CD4-positive, alpha-beta T cell (primary cell): ENCODE measurements at regions of chr13 and their contacts with region 1.

Region 1: DNA sequence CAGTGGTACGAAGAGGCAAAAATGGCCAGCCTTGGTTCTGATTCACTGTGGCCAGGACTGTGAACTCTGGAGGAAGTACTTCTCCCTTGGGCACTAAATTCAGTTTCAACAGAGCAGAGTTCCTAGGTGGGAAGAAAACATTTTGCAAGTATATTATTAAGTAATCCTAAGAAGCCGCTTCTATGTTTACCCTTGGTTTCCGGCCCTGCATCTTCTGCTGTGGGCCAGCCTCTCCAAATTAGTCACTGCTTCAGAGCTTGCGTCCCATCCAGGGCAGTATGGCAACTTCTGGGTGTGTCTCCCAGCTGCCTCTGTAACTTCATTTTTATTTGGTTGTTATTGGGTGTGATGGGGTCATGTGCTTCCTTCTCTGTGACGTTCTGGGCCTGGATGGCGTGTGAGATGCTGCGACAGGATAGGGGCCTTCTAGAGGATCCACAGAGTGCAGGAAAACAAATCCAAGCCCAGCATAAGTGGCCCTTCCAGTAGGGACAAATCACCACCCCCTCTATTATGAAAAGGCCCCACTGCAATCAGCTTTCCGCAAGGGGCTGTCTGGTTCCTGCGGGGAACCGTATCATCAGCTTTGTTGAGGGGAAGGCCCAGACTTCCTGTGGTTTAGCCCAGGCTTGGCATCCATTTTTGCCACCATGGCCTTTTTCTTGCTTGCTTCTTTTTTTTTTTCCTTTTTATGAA is 55.1 kb upstream of the C1QTNF9 start:
- DNase-seq: peak; percentile 46 to 92 (median 64)
- ATAC-seq: peak; percentile 66
- H3K4me3 ChIP-seq: peak overlapping the region; percentile 78
- H3K4me3 Mint-ChIP-seq: peak overlapping the region; percentile 94
- H3K27ac ChIP-seq: peak overlapping the region; percentile 89 to 92
- H3K27ac Mint-ChIP-seq: peak overlapping the region; percentile 92
- H3K4me1 ChIP-seq: peaks cover 76% of the 10 kb centered on the region
- H3K4me1 Mint-ChIP-seq: peaks cover 91% of the 10 kb centered on the region
- H3K27me3 ChIP-seq: no peaks in the 10 kb centered on the region
- H3K27me3 Mint-ChIP-seq: no peaks in the 10 kb centered on the region
- CTCF ChIP-seq: no peak

Region 2: GRCh38 chr13:24160454-24161009 is 93.8 kb before region 1 on chr13 and contains the start of gene SPATA13:
- CTCF ChIA-PET with region 1: no interaction called
- POLR2A ChIA-PET with region 1: interaction called, 7 read pairs
- intact Hi-C with region 1: loop called in 1 of 2 experiments (anchors 2 kb)
- DNase-seq: peak; percentile 89 to 99 (median 94)
- ATAC-seq: peak; percentile 92
- H3K4me3 ChIP-seq: peak within 1 kb of the TSS; percentile 81
- H3K4me3 Mint-ChIP-seq: peak within 1 kb of the TSS; percentile 90
- H3K27ac ChIP-seq: no peak within 1 kb of the TSS
- H3K27ac Mint-ChIP-seq: peak within 1 kb of the TSS; percentile 74
- H3K4me1 ChIP-seq: peaks cover 18% of the 10 kb centered on the region
- H3K4me1 Mint-ChIP-seq: peaks cover 14% of the 10 kb centered on the region
- H3K27me3 ChIP-seq: no peaks in the 10 kb centered on the region
- H3K27me3 Mint-ChIP-seq: no peaks in the 10 kb centered on the region
- CTCF ChIP-seq: no peak
- total RNA-seq, gene SPATA13: 87.7 to 94.6 TPM

Region 3: GRCh38 chr13:24264976-24265375 is 10.7 kb after region 1 on chr13:
- CTCF ChIA-PET with region 1: interaction called, 21 read pairs
- POLR2A ChIA-PET with region 1: interaction called, 596 read pairs
- intact Hi-C with region 1: loop called (anchors 1 kb)
- DNase-seq: peak; percentile 65 to 92 (median 82)
- ATAC-seq: peak; percentile 87
- H3K4me3 ChIP-seq: peak overlapping the region; percentile 26
- H3K4me3 Mint-ChIP-seq: peak overlapping the region; percentile 86
- H3K27ac ChIP-seq: peak overlapping the region; percentile 81 to 82
- H3K27ac Mint-ChIP-seq: peak overlapping the region; percentile 97
- H3K4me1 ChIP-seq: peaks cover 81% of the 10 kb centered on the region
- H3K4me1 Mint-ChIP-seq: peaks cover 95% of the 10 kb centered on the region
- H3K27me3 ChIP-seq: no peaks in the 10 kb centered on the region
- H3K27me3 Mint-ChIP-seq: no peaks in the 10 kb centered on the region
- CTCF ChIP-seq: no peak

Region 4: GRCh38 chr13:24307211-24308067 is 53.1 kb after region 1 on chr13:
- CTCF ChIA-PET with region 1: interaction called, 4 read pairs
- POLR2A ChIA-PET with region 1: interaction called, 3 read pairs
- intact Hi-C with region 1: loop called in 1 of 2 experiments (anchors 5 kb)
- DNase-seq: no peak
- ATAC-seq: peak; percentile 17
- H3K4me3 ChIP-seq: no peak overlapping the region
- H3K4me3 Mint-ChIP-seq: no peak overlapping the region
- H3K27ac ChIP-seq: no peak overlapping the region
- H3K27ac Mint-ChIP-seq: no peak overlapping the region
- H3K4me1 ChIP-seq: no peaks in the 10 kb centered on the region
- H3K4me1 Mint-ChIP-seq: no peaks in the 10 kb centered on the region
- H3K27me3 ChIP-seq: no peaks in the 10 kb centered on the region
- H3K27me3 Mint-ChIP-seq: no peaks in the 10 kb centered on the region
- CTCF ChIP-seq: no peak

Region 5: DNA sequence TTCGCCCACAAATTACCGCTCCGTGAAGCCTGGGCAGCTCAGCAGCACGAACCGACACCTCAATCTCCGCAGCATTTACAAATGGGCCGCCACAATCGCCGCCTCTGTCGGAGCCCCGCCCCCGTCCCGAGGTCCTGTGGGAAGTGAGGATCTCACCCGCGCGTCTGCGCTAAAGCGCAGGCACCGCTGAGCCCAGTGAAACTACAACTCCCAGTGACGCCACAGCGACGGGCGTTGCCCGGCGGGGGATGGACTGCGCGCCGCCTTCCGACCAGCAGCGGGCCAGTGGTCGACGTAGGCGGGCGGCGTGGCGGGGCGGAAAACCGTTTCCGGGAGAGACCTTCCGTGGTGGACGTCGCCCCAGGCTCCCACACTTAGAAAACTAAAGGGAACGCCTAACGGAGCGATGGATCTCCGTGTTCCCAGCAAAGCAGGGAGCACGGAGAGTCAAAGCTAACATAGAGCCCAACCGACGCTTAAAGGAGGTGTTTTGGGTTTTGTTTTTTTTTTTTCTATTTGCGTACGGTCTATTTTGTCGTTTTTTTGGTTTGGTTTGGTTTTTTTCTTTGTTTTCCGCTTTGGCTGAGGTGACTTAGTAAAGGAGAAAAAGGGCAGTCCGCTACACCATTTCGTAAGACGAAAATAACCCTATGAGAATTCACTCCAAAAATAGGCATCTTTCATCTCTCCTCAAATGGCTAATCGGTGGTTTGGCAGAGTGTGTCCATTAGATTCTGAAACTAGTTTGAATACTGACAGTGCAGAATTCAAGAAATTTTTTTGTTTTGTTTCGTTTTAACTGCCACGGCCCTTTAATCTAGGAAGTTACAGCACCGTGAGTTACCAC is 668.7 kb after region 1 on chr13:
- CTCF ChIA-PET with region 1: no interaction called
- POLR2A ChIA-PET with region 1: no interaction called
- intact Hi-C with region 1: loop called in 1 of 2 experiments (anchors 10 kb)
- DNase-seq: peak; percentile 84 to 97 (median 90)
- ATAC-seq: peak; percentile 98
- H3K4me3 ChIP-seq: peak overlapping the region; percentile 91
- H3K4me3 Mint-ChIP-seq: peak overlapping the region; percentile 91
- H3K27ac ChIP-seq: peak overlapping the region; percentile 70 to 93
- H3K27ac Mint-ChIP-seq: peak overlapping the region; percentile 90
- H3K4me1 ChIP-seq: peaks cover 5% of the 10 kb centered on the region
- H3K4me1 Mint-ChIP-seq: peaks cover 18% of the 10 kb centered on the region
- H3K27me3 ChIP-seq: peaks cover 0 to under 1% of the 10 kb centered on the region in 2 experiments
- H3K27me3 Mint-ChIP-seq: no peaks in the 10 kb centered on the region
- CTCF ChIP-seq: no peak